ENCODE measurements at regions of chr17 and their contacts with region 1.

Region 1: DNA sequence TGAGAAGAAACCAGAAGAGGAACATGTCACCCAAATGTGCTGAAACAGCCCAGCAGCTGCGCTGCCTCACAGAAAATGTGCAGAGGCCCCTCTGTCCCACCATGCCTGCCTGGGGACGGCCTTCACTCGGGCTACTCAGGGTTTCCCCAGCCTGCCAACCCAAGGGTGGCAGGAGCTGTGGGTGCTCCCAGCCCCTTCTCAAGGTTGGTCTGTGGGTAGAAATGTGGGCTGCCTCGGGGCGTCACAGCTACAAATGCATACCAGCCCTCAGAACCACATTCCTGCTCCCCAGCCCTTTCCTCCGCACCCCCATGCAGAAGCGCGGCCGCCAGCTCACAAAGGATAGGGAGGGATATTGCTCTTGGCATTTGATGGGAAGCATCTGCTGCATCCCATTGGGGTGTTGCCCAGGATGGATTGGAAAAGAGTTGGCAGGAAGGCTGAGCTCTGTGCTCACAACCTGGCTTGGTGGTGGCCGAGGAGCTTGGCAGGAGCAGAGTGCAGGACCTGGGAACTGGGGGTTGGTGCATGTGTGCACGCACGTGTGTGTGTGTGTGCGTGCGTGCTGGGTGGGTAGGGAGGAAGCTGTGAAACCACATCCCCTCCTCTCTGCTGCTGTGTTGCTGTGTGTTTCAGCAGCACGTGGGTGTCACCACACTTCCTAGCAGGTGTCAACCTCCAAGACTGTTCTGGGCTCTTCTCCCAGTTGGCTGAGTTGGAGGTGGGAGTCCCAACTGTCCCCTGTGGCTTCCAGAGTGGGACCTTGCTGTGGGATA is 304.4 kb downstream of the SEC14L1 start:
- DNase-seq: peak; percentile 92
- ATAC-seq: peak; percentile 49
- H3K4me3 ChIP-seq: peak overlapping the region; percentile 52; the same call in 1 of the 2 replicates
- H3K27ac ChIP-seq: peak overlapping the region; percentile 96
- H3K4me1 ChIP-seq: peaks cover 93% of the 10 kb centered on the region
- H3K27me3 ChIP-seq: no peaks in the 10 kb centered on the region
- CTCF ChIP-seq: no peak
- EP300 ChIP-seq: peak; percentile 98
- POLR2A ChIP-seq: peak; percentile 85
- RAD21 ChIP-seq: 0 out of 2 replicates have a peak, but pooled peaks have one; percentile 0

Region 2: DNA sequence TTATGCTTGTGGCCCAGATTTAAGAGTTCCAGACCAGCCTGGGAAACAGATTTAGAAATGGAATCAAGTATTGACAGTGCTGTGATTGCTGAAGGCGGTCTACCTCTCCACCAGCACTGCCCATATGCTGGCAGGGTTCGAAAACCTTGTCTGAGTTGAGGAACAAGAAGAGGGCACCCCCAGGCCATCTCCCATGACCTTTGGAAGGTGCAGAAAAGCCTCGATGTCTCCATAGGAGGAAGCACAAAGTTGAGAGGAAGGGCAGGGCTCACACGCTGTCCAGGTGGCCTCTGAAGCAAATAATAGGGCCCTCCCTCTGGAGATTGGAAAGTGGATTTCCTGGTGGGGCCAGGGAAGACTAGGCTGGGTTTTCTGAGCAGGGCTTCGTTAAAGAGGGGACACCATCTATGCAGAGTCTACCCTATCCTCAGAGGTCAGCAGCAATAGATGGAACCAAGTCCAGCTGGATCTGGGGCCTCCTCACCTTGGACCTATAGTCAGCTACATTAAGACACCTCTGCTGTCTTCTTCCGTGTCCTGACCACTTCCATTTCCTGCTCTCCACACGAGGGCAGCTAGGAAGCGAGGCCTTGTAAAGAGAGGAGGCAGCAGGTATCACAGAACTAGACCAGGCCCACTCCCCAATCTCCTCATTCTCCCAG is 787.0 kb before region 1 on chr17:
- CTCF ChIA-PET with region 1: no interaction called
- POLR2A ChIA-PET with region 1: no interaction called
- RAD21 ChIA-PET with region 1: no interaction called
- SMC1A ChIA-PET with region 1: no interaction called
- in situ Hi-C with region 1: no loop called
- intact Hi-C with region 1: no loop called
- DNase-seq: no peak
- ATAC-seq: no peak
- H3K4me3 ChIP-seq: no peak overlapping the region
- H3K27ac ChIP-seq: no peak overlapping the region
- H3K4me1 ChIP-seq: peaks cover 3% of the 10 kb centered on the region; the same call in 1 of the 2 replicates
- H3K27me3 ChIP-seq: no peaks in the 10 kb centered on the region
- CTCF ChIP-seq: no peak
- EP300 ChIP-seq: no peak
- POLR2A ChIP-seq: no peak
- RAD21 ChIP-seq: no peak

Region 3: GRCh38 chr17:77325577-77326075 is 119.5 kb before region 1 on chr17:
- CTCF ChIA-PET with region 1: interaction called, 17 read pairs
- POLR2A ChIA-PET with region 1: interaction called, 12 read pairs
- RAD21 ChIA-PET with region 1: interaction called, 17 read pairs
- SMC1A ChIA-PET with region 1: interaction called, 15 read pairs
- in situ Hi-C with region 1: loop called (anchors 25 kb)
- intact Hi-C with region 1: loop called (anchors 5 kb)
- DNase-seq: no peak
- ATAC-seq: peak; percentile 11
- H3K4me3 ChIP-seq: peak overlapping the region; percentile 21; the same call in 1 of the 2 replicates
- H3K27ac ChIP-seq: peak overlapping the region; percentile 88
- H3K4me1 ChIP-seq: peaks cover 51% of the 10 kb centered on the region
- H3K27me3 ChIP-seq: no peaks in the 10 kb centered on the region
- CTCF ChIP-seq: no peak
- EP300 ChIP-seq: no peak
- POLR2A ChIP-seq: no peak
- RAD21 ChIP-seq: no peak

Region 4: GRCh38 chr17:77404812-77405581 is 40.2 kb before region 1 on chr17:
- CTCF ChIA-PET with region 1: interaction called, 13 read pairs
- POLR2A ChIA-PET with region 1: interaction called, 7 read pairs
- RAD21 ChIA-PET with region 1: interaction called, 22 read pairs
- SMC1A ChIA-PET with region 1: interaction called, 19 read pairs
- in situ Hi-C with region 1: no loop called
- intact Hi-C with region 1: no loop called
- DNase-seq: peak; percentile 60
- ATAC-seq: peak; percentile 93
- H3K4me3 ChIP-seq: peak overlapping the region; percentile 59; the same call in 1 of the 2 replicates
- H3K27ac ChIP-seq: peak overlapping the region; percentile 77
- H3K4me1 ChIP-seq: peaks cover 36% of the 10 kb centered on the region
- H3K27me3 ChIP-seq: no peaks in the 10 kb centered on the region
- CTCF ChIP-seq: peak in 1 of 3 experiments; percentile 16; a peak in 1 of 6 replicates
- EP300 ChIP-seq: peak; percentile 27 to 44; a peak in 1 of 4 replicates
- POLR2A ChIP-seq: peak; percentile 78
- RAD21 ChIP-seq: no peak

Region 5: DNA sequence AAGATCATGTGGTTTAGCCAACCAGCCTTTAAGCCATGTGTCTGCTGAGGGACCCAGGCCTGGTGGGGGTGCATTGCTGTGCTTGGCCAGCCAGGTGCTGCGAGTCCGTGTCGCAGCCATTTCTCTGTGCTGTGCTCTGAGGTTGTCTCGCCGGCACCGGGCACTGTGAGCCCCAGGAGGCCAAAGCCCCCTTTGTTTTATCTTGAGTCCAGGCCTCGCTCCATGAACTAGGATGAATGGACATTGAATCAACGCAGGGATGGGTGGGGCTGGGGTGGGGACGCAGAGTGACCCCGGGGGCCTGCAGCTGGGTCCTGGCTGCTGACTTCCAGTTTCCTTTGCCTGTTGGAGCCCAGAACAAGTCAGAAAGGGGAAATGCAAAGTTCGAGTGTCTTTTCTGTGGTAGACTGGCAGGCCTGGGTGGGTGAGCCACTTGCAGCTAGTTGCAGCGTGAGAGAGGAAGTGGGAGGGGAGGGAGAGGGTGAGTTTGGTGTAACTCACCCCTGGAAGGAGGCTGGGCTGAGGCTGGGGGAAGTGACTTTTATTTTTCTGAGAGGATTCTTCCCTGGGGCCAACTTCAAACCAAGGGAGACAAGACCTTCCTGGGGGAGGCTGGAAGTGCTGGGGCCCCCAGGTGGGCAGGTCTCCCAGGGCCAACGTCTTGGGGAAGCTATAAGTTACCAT is 20.3 kb after region 1 on chr17:
- CTCF ChIA-PET with region 1: interaction called, 14 read pairs
- POLR2A ChIA-PET with region 1: interaction called, 41 read pairs
- RAD21 ChIA-PET with region 1: interaction called, 63 read pairs
- SMC1A ChIA-PET with region 1: interaction called, 82 read pairs
- in situ Hi-C with region 1: no loop called
- intact Hi-C with region 1: loop called (anchors 1 kb)
- DNase-seq: peak; percentile 86
- ATAC-seq: peak; percentile 82
- H3K4me3 ChIP-seq: peak overlapping the region; percentile 36; the same call in 1 of the 2 replicates
- H3K27ac ChIP-seq: peak overlapping the region; percentile 85
- H3K4me1 ChIP-seq: peaks cover 63% of the 10 kb centered on the region
- H3K27me3 ChIP-seq: no peaks in the 10 kb centered on the region
- CTCF ChIP-seq: no peak
- EP300 ChIP-seq: peak; percentile 29 to 50; a peak in 2 of 4 replicates
- POLR2A ChIP-seq: peak; percentile 48; the same call in 1 of the 2 replicates
- RAD21 ChIP-seq: no peak

Region 6: GRCh38 chr17:77476931-77477877 is 32.0 kb after region 1 on chr17:
- CTCF ChIA-PET with region 1: interaction called, 17 read pairs
- POLR2A ChIA-PET with region 1: interaction called, 41 read pairs
- RAD21 ChIA-PET with region 1: interaction called, 74 read pairs
- SMC1A ChIA-PET with region 1: interaction called, 82 read pairs
- in situ Hi-C with region 1: no loop called
- intact Hi-C with region 1: loop called (anchors 5 kb)
- DNase-seq: no peak
- ATAC-seq: no peak
- H3K4me3 ChIP-seq: no peak overlapping the region
- H3K27ac ChIP-seq: no peak overlapping the region
- H3K4me1 ChIP-seq: peaks cover 42% of the 10 kb centered on the region
- H3K27me3 ChIP-seq: no peaks in the 10 kb centered on the region
- CTCF ChIP-seq: no peak
- EP300 ChIP-seq: no peak
- POLR2A ChIP-seq: no peak
- RAD21 ChIP-seq: no peak

Region 7: GRCh38 chr17:77581480-77581879 is 136.3 kb after region 1 on chr17:
- CTCF ChIA-PET with region 1: no interaction called
- POLR2A ChIA-PET with region 1: no interaction called
- RAD21 ChIA-PET with region 1: no interaction called
- SMC1A ChIA-PET with region 1: no interaction called
- in situ Hi-C with region 1: no loop called
- intact Hi-C with region 1: no loop called
- DNase-seq: no peak
- ATAC-seq: no peak
- H3K4me3 ChIP-seq: no peak overlapping the region
- H3K27ac ChIP-seq: no peak overlapping the region
- H3K4me1 ChIP-seq: 0 out of 2 replicates have a peak, but pooled peaks cover 4% of the 10 kb centered on the region
- H3K27me3 ChIP-seq: peaks cover 0 to 1% of the 10 kb centered on the region in 2 experiments; a peak in 1 of 4 replicates
- CTCF ChIP-seq: no peak
- EP300 ChIP-seq: no peak
- POLR2A ChIP-seq: no peak
- RAD21 ChIP-seq: no peak

Region 8: DNA sequence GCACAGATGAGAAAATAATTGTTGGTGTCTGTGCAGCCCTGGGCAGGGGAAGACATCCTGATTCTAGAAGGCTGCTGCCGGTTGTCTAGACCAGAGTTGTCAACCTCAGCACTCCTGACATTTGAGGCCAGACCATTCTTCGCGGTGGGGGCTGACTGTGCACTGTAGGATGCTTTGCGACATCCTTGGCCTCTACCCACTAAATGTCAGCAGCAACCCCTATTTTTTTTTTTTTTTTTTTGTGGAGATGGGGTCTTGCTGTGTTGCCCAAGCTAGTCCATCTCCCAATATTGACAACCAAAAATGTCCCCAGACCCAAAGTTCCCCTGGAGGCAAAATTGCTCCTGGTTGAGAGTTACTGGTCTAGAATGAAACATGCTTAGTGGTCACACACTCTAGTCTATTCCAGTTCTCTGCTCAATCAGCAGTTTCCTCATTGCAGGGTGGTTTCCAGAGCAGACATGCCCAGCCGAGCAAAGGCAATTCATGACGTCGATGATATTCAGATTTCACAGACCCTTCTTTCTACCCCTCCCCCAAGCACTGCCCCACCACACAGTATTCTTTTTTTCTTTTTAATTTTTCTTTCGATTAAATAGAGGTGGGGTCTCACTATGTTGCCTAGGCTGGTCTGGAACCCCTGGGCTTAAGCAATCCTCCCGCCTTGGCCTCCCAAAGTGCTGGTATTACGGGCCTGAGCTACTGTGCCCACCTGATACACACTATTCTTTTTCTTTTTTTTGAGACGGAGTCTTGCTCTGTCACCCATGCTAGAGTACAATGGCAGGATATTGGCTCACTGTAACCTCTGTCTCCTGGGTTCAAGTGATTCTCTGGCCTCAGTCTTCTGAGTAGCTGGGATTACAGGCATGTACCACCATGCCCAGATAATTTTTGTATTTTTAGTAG is 710.0 kb after region 1 on chr17:
- CTCF ChIA-PET with region 1: no interaction called
- POLR2A ChIA-PET with region 1: no interaction called
- RAD21 ChIA-PET with region 1: no interaction called
- SMC1A ChIA-PET with region 1: no interaction called
- in situ Hi-C with region 1: loop called (anchors 10 kb)
- intact Hi-C with region 1: loop called (anchors 10 kb)
- DNase-seq: peak; percentile 97
- ATAC-seq: peak; percentile 80
- H3K4me3 ChIP-seq: no peak overlapping the region
- H3K27ac ChIP-seq: peak overlapping the region; percentile 93
- H3K4me1 ChIP-seq: peaks cover 64% of the 10 kb centered on the region
- H3K27me3 ChIP-seq: no peaks in the 10 kb centered on the region
- CTCF ChIP-seq: no peak
- EP300 ChIP-seq: peak; percentile 61 to 88; a peak in 3 of 4 replicates
- POLR2A ChIP-seq: peak; percentile 76
- RAD21 ChIP-seq: no peak